Left colon (tissue), 2 donors: ENCODE measurements at regions of chr9 and their contacts with region 1.

Region 1: GRCh38 chr9:75866273-75866871 is 24.1 kb upstream of the PCSK5 start:
- DNase-seq: peak in 1 of 2 donors; percentile 41
- ATAC-seq: peak; percentile 37

Region 2: GRCh38 chr9:76297721-76298239 is 431.4 kb after region 1 on chr9:
- intact Hi-C with region 1: loop called in 1 of 2 experiments (anchors 10 kb)
- DNase-seq: peak in 1 of 2 donors; percentile 32
- ATAC-seq: no peak